ENCODE measurements at regions of chr5 and their contacts with region 1.

Region 1: DNA sequence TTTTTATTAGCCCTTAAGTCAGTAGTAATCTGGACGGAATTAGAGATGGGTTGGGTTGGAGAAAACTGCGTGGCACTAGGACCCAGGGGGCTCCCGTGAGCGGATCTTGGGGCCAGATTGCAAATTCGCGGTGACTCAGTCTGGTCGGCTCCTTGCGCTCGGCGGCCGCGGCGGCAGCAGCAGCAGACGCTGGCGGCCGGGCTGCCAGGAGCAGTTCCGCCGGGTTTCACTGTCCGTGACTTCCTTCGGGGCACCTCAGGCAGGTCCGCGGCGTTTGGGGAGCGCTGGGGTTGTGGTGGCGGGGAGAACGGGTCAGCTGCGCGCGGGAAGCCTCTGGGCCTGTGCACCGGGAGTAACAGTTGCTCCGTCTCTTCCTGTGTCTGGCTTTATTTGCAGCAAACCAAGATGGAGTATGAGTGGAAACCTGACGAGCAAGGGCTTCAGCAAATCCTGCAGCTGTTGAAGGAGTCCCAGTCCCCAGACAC is 31.6 kb downstream of the TNPO1 start:
- DNase-seq: peak; percentile 82 to 87 (median 85)
- H3K4me3 ChIP-seq: peak overlapping the region; percentile 77 to 83
- H3K4me3 Mint-ChIP-seq: peak overlapping the region; percentile 93 to 99 (median 98)
- H3K27ac ChIP-seq: peak overlapping the region; percentile 84
- H3K27ac Mint-ChIP-seq: peak overlapping the region; percentile 93 to 98 (median 97)
- H3K4me1 ChIP-seq: peaks cover 46% of the 10 kb centered on the region
- H3K4me1 Mint-ChIP-seq: peaks cover 28 to 61% (median 42%) of the 10 kb centered on the region in 4 donors
- H3K27me3 ChIP-seq: no peaks in the 10 kb centered on the region
- H3K27me3 Mint-ChIP-seq: no peaks in the 10 kb centered on the region

Region 2: GRCh38 chr5:71757590-71758543 is 1090.2 kb before region 1 on chr5:
- CTCF ChIA-PET with region 1: no interaction called
- POLR2A ChIA-PET with region 1: no interaction called
- intact Hi-C with region 1: no loop called
- DNase-seq: peak in 4 of 5 donors; percentile 19 to 35 (median 28)
- H3K4me3 ChIP-seq: no peak overlapping the region
- H3K4me3 Mint-ChIP-seq: peak overlapping the region in 6 of 8 donors; percentile 21 to 68 (median 40)
- H3K27ac ChIP-seq: no peak overlapping the region
- H3K27ac Mint-ChIP-seq: peak overlapping the region in 4 of 7 donors; percentile 9 to 37 (median 32)
- H3K4me1 ChIP-seq: no peaks in the 10 kb centered on the region
- H3K4me1 Mint-ChIP-seq: peaks cover 0 to 9% (median 6%) of the 10 kb centered on the region in 4 donors
- H3K27me3 ChIP-seq: no peaks in the 10 kb centered on the region
- H3K27me3 Mint-ChIP-seq: peaks cover 1 to 7% of the 10 kb centered on the region in 2 donors

Region 3: GRCh38 chr5:72319976-72320752 is 527.9 kb before region 1 on chr5 and contains the starts of genes MRPS27 and PTCD2:
- CTCF ChIA-PET with region 1: no interaction called
- POLR2A ChIA-PET with region 1: no interaction called
- intact Hi-C with region 1: loop called (anchors 10 kb)
- DNase-seq: peak; percentile 92 to 97 (median 96)
- H3K4me3 ChIP-seq: peak within 1 kb of the TSS; percentile 100
- H3K4me3 Mint-ChIP-seq: peak within 1 kb of the TSS; percentile 96 to 99 (median 98)
- H3K27ac ChIP-seq: peak within 1 kb of the TSS; percentile 65
- H3K27ac Mint-ChIP-seq: peak within 1 kb of the TSS; percentile 87 to 97 (median 96)
- H3K4me1 ChIP-seq: peaks cover 9% of the 10 kb centered on the region
- H3K4me1 Mint-ChIP-seq: peaks cover 19 to 49% (median 25%) of the 10 kb centered on the region in 4 donors
- H3K27me3 ChIP-seq: no peaks in the 10 kb centered on the region
- H3K27me3 Mint-ChIP-seq: no peaks in the 10 kb centered on the region
- total RNA-seq, gene MRPS27: 36.6 to 44.6 TPM
- total RNA-seq, gene PTCD2: 11.6 to 12.0 TPM

Region 4: GRCh38 chr5:72955768-72956323 is 107.8 kb after region 1 on chr5 and contains the start of gene FCHO2:
- CTCF ChIA-PET with region 1: no interaction called
- POLR2A ChIA-PET with region 1: interaction called, 4 read pairs
- intact Hi-C with region 1: loop called (anchors 1 kb)
- DNase-seq: peak; percentile 92 to 95 (median 93)
- H3K4me3 ChIP-seq: peak within 1 kb of the TSS; percentile 85 to 96
- H3K4me3 Mint-ChIP-seq: peak within 1 kb of the TSS; percentile 90 to 99 (median 94)
- H3K27ac ChIP-seq: peak within 1 kb of the TSS; percentile 29
- H3K27ac Mint-ChIP-seq: peak within 1 kb of the TSS; percentile 85 to 91 (median 87)
- H3K4me1 ChIP-seq: peaks cover 15% of the 10 kb centered on the region
- H3K4me1 Mint-ChIP-seq: peaks cover 13 to 19% (median 13%) of the 10 kb centered on the region in 4 donors
- H3K27me3 ChIP-seq: no peaks in the 10 kb centered on the region
- H3K27me3 Mint-ChIP-seq: peaks cover 14 to 34% of the 10 kb centered on the region in 2 donors
- total RNA-seq, gene FCHO2: 6.1 to 6.3 TPM

Region 5: GRCh38 chr5:73189871-73190376 is 341.9 kb after region 1 on chr5:
- CTCF ChIA-PET with region 1: no interaction called
- POLR2A ChIA-PET with region 1: no interaction called
- intact Hi-C with region 1: no loop called
- DNase-seq: no peak
- H3K4me3 ChIP-seq: no peak overlapping the region
- H3K4me3 Mint-ChIP-seq: no peak overlapping the region
- H3K27ac ChIP-seq: no peak overlapping the region
- H3K27ac Mint-ChIP-seq: no peak overlapping the region
- H3K4me1 ChIP-seq: no peaks in the 10 kb centered on the region
- H3K4me1 Mint-ChIP-seq: no peaks in the 10 kb centered on the region
- H3K27me3 ChIP-seq: no peaks in the 10 kb centered on the region
- H3K27me3 Mint-ChIP-seq: peaks cover 19 to 24% of the 10 kb centered on the region in 2 donors

Measured in CD4-positive, alpha-beta memory T cell (primary cell).